ENCODE measurements at regions of chr15 and their contacts with region 1.

Region 1: DNA sequence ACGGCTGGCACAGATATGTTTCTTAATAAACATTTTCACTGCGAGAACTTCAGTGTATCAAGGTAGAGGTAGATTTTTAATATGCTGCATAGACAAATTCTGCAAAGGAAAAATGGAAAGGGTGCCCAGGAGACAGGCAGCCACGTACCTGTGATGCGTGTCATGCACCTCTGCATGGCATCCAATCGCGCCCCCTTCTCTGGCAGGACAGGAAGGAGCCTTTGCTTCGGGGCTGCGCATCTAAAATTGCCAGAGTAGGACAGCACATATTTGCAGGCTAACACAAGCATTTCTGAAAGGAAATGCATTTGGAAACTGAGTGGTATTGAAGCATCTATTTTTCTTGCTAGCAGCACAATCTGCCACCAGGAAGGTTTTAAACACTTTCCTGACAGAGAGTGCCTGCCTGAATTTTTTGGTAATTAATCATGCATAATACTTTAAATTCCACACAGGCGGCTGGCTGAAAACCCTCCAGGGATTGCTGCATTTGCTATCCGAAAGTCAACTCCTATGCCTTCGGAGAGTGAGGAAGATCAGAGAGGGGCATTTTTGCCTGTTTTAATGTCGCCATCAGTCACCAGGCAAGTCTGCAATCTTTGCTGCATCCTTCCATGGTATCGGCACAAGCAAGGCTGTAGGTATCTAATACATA is 165.1 kb upstream of the ATP10A start:
- DNase-seq: peak; percentile 68
- H3K4me3 ChIP-seq: peak overlapping the region in 3 of 4 donors; percentile 6 to 35 (median 6)
- H3K27ac ChIP-seq: no peak overlapping the region
- H3K4me1 ChIP-seq: peaks cover 0 to 12% (median 10%) of the 10 kb centered on the region in 4 donors
- H3K27me3 ChIP-seq: no peaks in the 10 kb centered on the region
- CTCF ChIP-seq: no peak
- EP300 ChIP-seq: no peak
- POLR2A ChIP-seq: no peak

Region 2: DNA sequence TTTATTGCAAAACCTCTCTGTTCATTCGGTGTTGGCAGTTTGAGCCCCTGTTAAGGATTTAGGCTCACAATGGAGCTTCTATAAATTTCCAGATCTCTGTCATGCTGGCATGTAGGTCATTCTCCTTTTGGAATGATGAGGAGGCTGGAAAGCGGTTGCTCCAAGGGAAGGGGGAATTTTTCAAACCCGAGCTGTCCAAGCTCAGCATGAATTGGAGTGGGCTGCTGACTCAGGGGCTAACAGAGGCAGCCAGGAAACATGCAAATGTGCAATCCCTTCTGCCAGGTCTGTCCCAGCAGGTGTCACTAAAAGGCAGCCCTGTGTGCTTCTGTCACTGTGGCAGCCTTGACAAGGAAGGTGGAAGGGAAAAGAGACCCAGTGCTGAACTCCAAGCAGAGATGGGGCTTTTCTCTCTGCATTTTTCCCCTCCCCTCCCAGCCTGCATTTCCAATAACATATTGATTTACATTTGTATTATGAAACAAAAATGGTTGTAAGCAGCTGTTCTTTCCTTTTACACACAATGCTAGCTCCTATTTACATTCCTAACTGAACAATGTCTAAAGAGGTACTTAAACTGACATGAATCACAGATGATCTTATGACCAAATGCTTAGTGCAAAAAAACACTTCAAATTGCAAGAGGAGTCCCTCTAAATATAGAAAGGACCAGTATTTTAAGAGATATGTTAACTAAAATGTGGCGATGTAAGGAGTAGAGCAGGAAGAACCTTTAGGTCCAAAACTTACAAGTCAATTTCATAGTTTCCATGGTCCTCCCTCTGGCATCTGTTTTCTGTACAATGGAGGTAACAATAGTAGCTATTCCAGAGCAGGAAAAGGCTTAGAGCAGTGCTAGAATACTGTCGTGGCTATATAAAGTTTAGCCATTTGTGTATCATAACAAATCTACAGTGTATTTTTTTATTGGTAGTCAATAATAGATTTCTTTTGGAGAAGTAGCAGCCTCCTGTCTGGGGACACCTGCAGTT is 80.6 kb before region 1 on chr15:
- intact Hi-C with region 1: loop called (anchors 10 kb)
- DNase-seq: no peak
- H3K4me3 ChIP-seq: no peak overlapping the region
- H3K27ac ChIP-seq: peak overlapping the region in 3 of 4 donors; percentile 20 to 44 (median 31)
- H3K4me1 ChIP-seq: peaks cover 0 to 23% (median 19%) of the 10 kb centered on the region in 4 donors
- H3K27me3 ChIP-seq: no peaks in the 10 kb centered on the region
- CTCF ChIP-seq: peak; percentile 18 to 29 (median 19)
- EP300 ChIP-seq: no peak
- POLR2A ChIP-seq: no peak

Region 3: DNA sequence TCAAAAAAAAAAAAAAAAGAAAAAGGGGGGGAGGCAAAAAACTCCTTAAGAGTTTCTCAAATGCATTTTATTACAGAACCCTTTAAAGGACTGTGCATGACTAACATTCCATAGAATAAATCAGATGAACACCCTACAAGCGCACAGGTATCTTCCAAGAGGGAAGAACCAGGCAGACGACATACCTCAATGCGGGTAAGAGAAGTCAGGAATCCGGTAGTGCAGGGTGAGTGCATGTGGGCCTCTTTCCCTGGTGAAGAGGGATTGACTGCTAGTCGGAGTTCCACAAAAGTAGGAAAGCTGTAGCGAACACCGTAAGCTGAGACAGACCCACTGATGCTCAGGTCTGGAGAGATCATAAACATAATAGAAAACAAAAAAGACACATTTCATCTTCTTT is 312.2 kb after region 1 on chr15:
- intact Hi-C with region 1: no loop called
- DNase-seq: no peak
- H3K4me3 ChIP-seq: no peak overlapping the region
- H3K27ac ChIP-seq: no peak overlapping the region
- H3K4me1 ChIP-seq: no peaks in the 10 kb centered on the region
- H3K27me3 ChIP-seq: no peaks in the 10 kb centered on the region
- CTCF ChIP-seq: no peak
- EP300 ChIP-seq: no peak
- POLR2A ChIP-seq: no peak